ENCODE measurements at regions of chr10 and their contacts with region 1.

Region 1: GRCh38 chr10:60434418-60435046 is 44.9 kb upstream of the ANK3 start:
- DNase-seq: peak; percentile 36
- CTCF ChIP-seq: peak; percentile 47

Region 2: DNA sequence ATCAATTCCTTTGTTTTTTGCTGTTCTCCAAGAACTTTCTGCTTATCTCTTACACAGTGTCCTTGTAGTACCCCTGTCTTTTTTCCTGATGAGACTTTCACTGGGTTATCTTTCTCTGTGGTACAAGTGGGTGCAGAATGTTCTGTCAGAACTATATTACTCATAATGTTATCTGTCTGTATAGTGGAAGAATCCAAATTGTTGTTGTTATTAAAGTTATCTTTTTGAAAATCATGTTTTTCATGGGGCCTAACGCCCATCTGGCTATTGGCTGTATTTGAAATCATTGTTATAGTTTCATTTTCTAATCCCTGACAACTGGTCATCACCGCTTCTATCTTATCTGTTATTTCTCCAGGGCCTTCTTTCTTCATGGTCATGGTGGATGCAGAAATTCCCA is 365.2 kb before region 1 on chr10:
- in situ Hi-C with region 1: no loop called
- DNase-seq: no peak
- CTCF ChIP-seq: no peak

Region 3: DNA sequence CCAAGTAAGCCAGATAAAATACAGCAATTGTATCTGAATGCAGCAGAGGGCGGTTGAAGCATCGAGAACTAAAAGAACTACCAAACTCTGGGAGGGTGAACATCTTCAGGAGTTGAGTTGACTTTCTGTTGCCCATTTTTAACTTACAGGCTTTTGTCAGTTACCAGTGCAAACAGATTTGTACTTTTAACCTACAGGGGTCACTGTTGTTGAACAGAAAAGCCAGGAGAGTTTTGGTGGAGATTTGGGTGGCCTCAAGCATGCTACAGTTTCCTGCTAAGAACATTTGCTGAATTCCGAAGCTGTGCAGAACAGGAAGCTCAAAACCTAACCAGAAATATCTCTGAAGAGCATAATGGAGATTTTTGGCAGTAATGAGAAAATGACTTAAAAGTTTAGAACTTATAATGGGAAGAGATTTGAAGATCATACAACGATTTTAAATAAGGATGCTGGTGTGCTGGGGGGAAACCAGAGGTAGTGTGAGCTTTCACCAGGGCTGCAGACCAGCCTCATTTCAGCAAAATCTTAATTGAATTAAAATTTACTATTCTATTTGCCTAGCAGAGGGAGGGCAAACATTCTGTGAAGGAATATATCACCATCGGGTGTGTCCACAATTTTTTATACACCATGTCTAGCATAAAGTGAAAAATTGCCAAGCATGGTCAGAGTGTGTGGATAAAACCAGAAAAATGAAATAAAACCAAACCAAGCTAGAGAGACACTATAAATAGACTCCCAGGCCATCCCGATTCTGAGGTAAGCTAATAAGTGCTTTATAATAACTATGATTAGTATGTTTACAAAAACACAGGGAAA is 319.6 kb before region 1 on chr10:
- in situ Hi-C with region 1: loop called (anchors 25 kb)
- DNase-seq: peak; percentile 46
- CTCF ChIP-seq: peak; percentile 45

Region 4: DNA sequence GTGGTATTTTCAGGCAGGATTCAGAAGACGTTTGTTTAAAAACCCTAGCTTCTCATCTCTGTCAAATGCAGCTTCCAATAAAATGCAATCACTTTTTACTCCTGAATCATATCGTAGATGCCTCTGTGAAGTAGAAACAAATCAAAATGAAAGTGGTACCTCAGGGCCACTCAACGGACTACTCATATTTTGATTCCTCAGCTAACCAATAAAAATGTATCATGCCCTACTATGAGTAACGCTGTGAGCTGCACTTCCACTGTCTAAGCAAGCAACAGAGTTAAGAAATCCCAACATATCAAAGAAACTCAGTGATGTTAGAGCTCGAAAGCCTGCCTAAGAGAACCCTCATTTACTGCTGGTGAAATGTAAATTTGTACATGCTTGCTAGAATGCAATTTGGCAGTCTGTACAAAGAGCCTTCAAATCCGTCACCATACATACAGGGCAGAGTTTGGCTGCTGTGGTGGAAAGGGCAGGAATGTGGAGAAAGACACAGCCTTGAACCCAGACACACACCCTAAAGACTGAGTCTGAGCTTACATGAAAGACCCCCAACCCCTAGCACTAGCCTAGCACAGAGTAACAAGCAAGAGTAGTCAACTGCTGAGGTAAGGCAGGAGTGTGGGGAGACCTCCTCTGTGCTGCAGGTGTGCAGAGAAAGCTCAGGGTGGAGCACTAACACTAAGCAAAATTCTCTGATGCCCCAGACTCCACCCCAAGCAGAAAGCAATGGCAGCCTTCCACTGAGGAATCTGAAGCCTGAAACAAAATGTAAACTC is 196.4 kb before region 1 on chr10:
- in situ Hi-C with region 1: loop called (anchors 10 kb)
- DNase-seq: peak; percentile 37
- CTCF ChIP-seq: peak; percentile 30

Region 5: DNA sequence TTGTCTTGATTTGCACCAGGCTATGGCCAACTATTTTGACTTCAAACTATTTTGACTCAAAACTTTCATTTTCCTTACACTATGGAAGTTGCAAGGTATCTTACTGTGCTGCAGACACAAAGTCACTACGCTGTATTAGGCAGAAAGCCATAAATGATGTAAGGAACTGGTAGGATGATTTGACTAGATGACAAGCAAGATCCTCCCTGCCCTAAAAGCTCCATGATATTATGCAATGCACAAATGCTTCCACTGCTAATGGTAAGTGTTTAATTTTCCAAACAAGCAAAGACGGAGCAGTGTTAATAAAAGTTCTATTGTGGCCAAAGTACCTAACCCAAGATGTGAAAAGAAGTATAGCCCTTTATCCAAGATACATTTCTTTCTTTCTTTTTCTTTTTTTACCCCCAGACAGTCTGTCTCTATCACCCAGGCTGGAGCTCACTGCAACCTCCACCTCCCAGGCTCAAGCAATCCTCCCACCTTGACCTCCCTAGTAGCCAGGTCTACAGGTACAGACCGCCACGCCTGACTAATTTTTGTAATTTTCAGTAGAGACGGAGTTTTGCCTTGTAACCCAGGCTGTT is 143.1 kb before region 1 on chr10:
- in situ Hi-C with region 1: no loop called
- DNase-seq: no peak
- CTCF ChIP-seq: no peak